WTC11 (cell line): ENCODE measurements at regions of chr3 and their contacts with region 1.

Region 1: DNA sequence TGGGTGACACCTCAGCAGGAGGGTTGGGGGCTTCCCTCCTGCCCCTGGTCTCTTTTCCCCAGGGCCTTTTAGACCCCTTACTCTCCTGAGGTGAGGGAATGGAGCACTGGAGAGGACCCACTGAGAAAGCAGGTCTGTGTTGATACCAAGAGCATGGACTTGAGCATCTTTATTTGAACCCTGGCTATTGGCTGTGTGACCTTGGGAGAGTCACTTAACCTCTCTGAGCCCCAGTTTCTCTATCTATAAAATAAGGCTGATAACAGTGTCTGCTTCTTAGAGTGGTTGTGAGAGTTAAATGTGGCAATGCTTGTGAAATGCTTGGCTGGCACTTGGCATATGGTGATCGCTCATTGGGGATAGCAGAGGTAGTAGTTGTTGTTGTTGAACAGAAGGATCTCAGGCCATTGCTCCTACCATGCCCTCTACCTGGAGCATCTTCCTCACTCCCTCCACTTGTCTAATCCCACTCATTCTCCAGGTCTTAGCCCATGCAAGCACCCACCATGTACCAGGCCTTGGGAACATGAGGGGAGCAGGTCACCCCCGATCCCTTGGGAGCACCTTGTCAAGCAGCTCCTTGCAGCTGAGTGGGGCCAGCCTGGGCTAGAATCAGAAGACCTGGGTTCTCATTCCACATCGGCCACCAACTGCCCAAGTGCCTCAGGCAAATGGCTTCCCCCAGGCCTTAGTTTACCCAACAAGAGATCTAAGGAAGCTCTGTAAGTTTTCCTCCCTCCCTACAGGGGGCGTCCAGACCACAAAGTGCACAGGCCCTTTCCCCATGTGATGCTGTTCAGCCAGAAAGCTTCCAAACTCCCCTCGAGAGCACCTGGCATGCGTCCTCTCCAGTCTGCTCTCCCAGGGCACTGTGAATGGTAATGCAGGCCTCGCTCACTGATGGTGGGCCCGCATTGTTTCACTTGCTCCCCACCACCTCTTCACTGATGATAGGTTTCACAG is 96.7 kb downstream of the LSM3 start:
- DNase-seq: peak; percentile 55
- ATAC-seq: peak; percentile 25
- H3K4me3 Mint-ChIP-seq: no peak overlapping the region
- H3K27ac Mint-ChIP-seq: no peak overlapping the region
- H3K4me1 Mint-ChIP-seq: peaks cover 86% of the 10 kb centered on the region
- H3K27me3 Mint-ChIP-seq: peaks cover under 1% of the 10 kb centered on the region; the same call in 1 of the 2 replicates
- CTCF ChIP-seq: peak; percentile 46; the same call in 1 of the 2 replicates

Region 2: GRCh38 chr3:14261229-14261628 is 14.1 kb before region 1 on chr3:
- CTCF ChIA-PET with region 1: interaction called, 10 read pairs
- POLR2A ChIA-PET with region 1: no interaction called
- DNase-seq: peak; percentile 92
- ATAC-seq: peak; percentile 85
- H3K4me3 Mint-ChIP-seq: no peak overlapping the region
- H3K27ac Mint-ChIP-seq: no peak overlapping the region
- H3K4me1 Mint-ChIP-seq: peaks cover 17% of the 10 kb centered on the region
- H3K27me3 Mint-ChIP-seq: peaks cover 5% of the 10 kb centered on the region
- CTCF ChIP-seq: peak; percentile 99

Region 3: DNA sequence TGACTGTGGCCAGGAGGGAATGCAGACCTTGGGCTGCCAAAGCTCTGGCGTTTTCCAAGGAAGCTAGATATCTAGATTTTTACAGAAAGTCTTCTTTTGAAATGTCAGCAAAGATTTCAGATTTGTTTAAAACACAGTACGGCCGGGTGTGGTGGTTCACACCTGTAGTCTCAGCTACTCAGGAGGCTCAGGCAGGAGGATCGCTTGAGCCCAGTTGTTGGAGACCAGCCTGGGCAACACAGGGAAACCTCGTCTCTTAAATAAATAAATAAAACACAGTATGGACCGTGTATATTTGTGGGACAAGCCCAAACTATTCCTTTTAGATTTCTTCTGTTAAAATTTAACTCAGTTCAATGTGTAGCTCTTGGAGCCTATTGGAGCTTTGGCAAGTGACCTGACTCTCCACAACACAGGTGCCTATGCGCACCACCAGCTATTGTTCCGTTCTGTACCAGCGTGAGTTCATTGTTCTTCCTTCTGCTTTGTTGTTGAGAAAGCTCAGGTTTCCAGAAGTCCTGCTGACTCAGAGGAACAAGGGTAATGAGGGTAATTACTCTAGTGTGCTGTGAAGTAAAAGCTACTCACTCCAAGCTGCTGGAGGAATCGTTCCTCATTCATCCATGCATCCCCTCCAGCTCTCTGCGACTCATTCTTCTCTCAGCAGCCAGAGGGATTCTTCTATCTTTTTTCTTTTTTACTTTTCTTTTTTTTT is 54.0 kb after region 1 on chr3:
- CTCF ChIA-PET with region 1: interaction called, 10 read pairs
- POLR2A ChIA-PET with region 1: no interaction called
- DNase-seq: peak; percentile 39
- ATAC-seq: peak; percentile 94
- H3K4me3 Mint-ChIP-seq: no peak overlapping the region
- H3K27ac Mint-ChIP-seq: peak overlapping the region; percentile 77
- H3K4me1 Mint-ChIP-seq: peaks cover 35% of the 10 kb centered on the region
- H3K27me3 Mint-ChIP-seq: peaks cover 3% of the 10 kb centered on the region; the same call in 1 of the 2 replicates
- CTCF ChIP-seq: no peak

Region 4: DNA sequence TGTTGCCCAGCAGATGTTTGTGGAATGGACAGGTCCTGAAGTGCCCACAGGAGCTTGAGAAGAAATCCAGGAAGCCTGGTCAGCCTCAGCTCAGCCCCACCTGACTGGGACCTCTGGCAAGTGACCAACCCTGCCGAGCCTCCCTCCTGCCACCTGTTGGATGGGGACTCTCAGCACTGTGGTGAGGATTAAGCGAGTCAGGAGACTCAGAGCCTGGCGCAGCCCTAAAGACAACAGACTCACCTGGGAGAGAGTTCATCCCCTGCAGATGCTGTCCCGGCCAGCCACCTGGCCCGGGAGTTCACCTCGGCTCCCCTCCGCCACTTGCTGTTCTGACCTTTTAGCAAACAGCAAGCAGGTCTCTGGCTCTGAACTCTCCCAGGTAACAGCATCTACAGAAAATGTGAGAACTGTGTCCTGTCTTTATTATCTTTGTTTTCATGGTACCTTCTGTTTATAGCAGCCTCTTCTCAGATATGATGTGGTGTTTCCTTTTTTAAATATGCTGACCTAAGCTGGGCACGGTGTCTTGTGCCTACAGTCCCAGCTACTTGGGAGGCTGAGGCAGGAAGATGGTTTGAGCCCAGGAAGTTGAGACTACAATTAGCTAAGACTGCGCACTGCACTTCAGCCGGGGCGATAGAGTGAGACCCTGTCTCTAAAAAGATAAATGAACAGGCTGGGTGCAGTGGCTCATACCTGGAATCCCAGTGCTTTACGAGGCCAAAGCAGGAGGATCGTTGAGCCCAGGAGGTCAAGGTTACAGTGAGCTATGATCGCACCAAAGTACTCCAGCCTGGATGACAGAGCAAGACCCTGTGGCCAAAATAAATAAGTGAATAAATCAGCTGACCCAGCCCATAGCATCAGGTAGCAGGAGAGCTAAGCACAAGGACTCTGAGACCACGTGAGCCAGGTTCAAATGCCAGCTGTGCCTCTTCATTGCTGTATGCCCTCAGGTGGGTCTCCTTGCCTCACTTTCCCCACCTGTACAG is 94.7 kb after region 1 on chr3:
- CTCF ChIA-PET with region 1: interaction called, 47 read pairs
- POLR2A ChIA-PET with region 1: no interaction called
- DNase-seq: peak; percentile 70
- ATAC-seq: peak; percentile 95
- H3K4me3 Mint-ChIP-seq: no peak overlapping the region
- H3K27ac Mint-ChIP-seq: peak overlapping the region; percentile 19; the same call in 1 of the 2 replicates
- H3K4me1 Mint-ChIP-seq: peaks cover 51% of the 10 kb centered on the region
- H3K27me3 Mint-ChIP-seq: peaks cover 2% of the 10 kb centered on the region; the same call in 1 of the 2 replicates
- CTCF ChIP-seq: no peak

Region 5: GRCh38 chr3:14391033-14391432 is 115.8 kb after region 1 on chr3:
- CTCF ChIA-PET with region 1: interaction called, 10 read pairs
- POLR2A ChIA-PET with region 1: no interaction called
- DNase-seq: no peak
- ATAC-seq: no peak
- H3K4me3 Mint-ChIP-seq: no peak overlapping the region
- H3K27ac Mint-ChIP-seq: no peak overlapping the region
- H3K4me1 Mint-ChIP-seq: peaks cover 24% of the 10 kb centered on the region
- H3K27me3 Mint-ChIP-seq: peaks cover 3% of the 10 kb centered on the region; the same call in 1 of the 2 replicates
- CTCF ChIP-seq: no peak